IMR-90 (cell line): ENCODE measurements at regions of chr13 and their contacts with region 1.

Region 1: DNA sequence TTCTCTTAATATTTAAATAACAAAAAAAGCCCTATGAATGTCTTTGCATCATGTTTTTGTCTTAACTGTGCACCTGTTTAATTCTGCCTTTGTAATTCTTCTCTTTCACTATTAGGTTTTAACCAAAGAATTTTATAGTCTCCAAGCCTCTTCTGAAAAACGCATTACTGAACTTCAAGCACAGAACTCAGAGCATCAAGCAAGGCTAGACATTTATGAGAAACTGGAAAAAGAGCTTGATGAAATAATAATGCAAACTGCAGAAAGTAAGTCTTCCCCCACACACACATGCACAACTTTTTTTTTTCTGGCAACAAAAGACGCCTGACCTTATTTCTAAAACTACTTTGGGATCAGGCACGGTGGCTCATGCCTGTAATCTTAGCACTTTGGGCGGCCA is 126.5 kb downstream of the PIBF1 start:
- DNase-seq: no peak
- ATAC-seq: no peak
- H3K4me3 ChIP-seq: no peak overlapping the region
- H3K27ac ChIP-seq: no peak overlapping the region
- H3K4me1 ChIP-seq: no peaks in the 10 kb centered on the region
- H3K27me3 ChIP-seq: no peaks in the 10 kb centered on the region
- CTCF ChIP-seq: no peak
- POLR2A ChIP-seq: no peak
- RAD21 ChIP-seq: no peak

Region 2: GRCh38 chr13:72931311-72931710 is 22.9 kb after region 1 on chr13:
- CTCF ChIA-PET with region 1: no interaction called
- POLR2A ChIA-PET with region 1: no interaction called
- dilution Hi-C with region 1: no loop called
- in situ Hi-C with region 1: no loop called
- intact Hi-C with region 1: no loop called
- DNase-seq: no peak
- ATAC-seq: no peak
- H3K4me3 ChIP-seq: no peak overlapping the region
- H3K27ac ChIP-seq: no peak overlapping the region
- H3K4me1 ChIP-seq: no peaks in the 10 kb centered on the region
- H3K27me3 ChIP-seq: no peaks in the 10 kb centered on the region
- CTCF ChIP-seq: no peak
- POLR2A ChIP-seq: no peak
- RAD21 ChIP-seq: no peak

Region 3: GRCh38 chr13:73321043-73321442 is 412.6 kb after region 1 on chr13:
- CTCF ChIA-PET with region 1: no interaction called
- POLR2A ChIA-PET with region 1: no interaction called
- dilution Hi-C with region 1: no loop called
- in situ Hi-C with region 1: no loop called
- intact Hi-C with region 1: no loop called
- DNase-seq: no peak
- ATAC-seq: no peak
- H3K4me3 ChIP-seq: no peak overlapping the region
- H3K27ac ChIP-seq: no peak overlapping the region
- H3K4me1 ChIP-seq: no peaks in the 10 kb centered on the region
- H3K27me3 ChIP-seq: no peaks in the 10 kb centered on the region
- CTCF ChIP-seq: no peak
- POLR2A ChIP-seq: no peak
- RAD21 ChIP-seq: no peak

Region 4: DNA sequence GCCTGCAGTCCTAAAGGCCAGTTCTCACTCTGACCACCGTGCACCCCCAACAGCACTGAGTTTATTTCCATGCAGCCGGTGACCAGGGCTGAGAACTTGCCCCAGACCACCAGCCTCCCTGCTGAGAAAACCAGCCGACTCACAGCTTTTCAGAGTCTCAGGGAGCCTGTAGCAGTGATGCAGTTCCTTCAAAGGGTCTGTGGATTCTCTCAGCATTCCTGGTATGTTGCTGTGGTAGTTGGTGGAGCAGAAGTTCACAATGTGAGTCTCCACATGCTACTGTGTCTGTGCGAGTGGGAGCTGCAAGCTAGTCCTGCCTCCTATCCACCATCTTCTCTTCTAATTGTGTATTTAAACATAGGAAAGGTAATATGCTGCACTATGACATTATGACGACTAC is 1480.6 kb after region 1 on chr13:
- CTCF ChIA-PET with region 1: no interaction called
- POLR2A ChIA-PET with region 1: no interaction called
- dilution Hi-C with region 1: no loop called
- in situ Hi-C with region 1: no loop called
- intact Hi-C with region 1: loop called (anchors 5 kb)
- DNase-seq: no peak
- ATAC-seq: no peak
- H3K4me3 ChIP-seq: no peak overlapping the region
- H3K27ac ChIP-seq: no peak overlapping the region
- H3K4me1 ChIP-seq: no peaks in the 10 kb centered on the region
- H3K27me3 ChIP-seq: no peaks in the 10 kb centered on the region
- CTCF ChIP-seq: no peak
- POLR2A ChIP-seq: no peak
- RAD21 ChIP-seq: no peak